ENCODE measurements at regions of chr17 and their contacts with region 1.

Region 1: GRCh38 chr17:49567871-49568694 is 7.6 kb upstream of the NXPH3 start:
- DNase-seq: no peak
- H3K4me3 ChIP-seq: peak overlapping the region; percentile 41 to 48
- H3K27ac ChIP-seq: peak overlapping the region; percentile 61
- H3K4me1 ChIP-seq: peaks cover 34% of the 10 kb centered on the region
- H3K27me3 ChIP-seq: no peaks in the 10 kb centered on the region
- CTCF ChIP-seq: peak; percentile 97 to 99 (median 97)
- POLR2A ChIP-seq: no peak

Region 2: GRCh38 chr17:49434821-49435670 is 133.0 kb before region 1 on chr17:
- intact Hi-C with region 1: no loop called
- DNase-seq: no peak
- H3K4me3 ChIP-seq: no peak overlapping the region
- H3K27ac ChIP-seq: no peak overlapping the region
- H3K4me1 ChIP-seq: no peaks in the 10 kb centered on the region
- H3K27me3 ChIP-seq: no peaks in the 10 kb centered on the region
- CTCF ChIP-seq: peak in 2 of 3 experiments; percentile 16 to 54
- POLR2A ChIP-seq: no peak

Region 3: DNA sequence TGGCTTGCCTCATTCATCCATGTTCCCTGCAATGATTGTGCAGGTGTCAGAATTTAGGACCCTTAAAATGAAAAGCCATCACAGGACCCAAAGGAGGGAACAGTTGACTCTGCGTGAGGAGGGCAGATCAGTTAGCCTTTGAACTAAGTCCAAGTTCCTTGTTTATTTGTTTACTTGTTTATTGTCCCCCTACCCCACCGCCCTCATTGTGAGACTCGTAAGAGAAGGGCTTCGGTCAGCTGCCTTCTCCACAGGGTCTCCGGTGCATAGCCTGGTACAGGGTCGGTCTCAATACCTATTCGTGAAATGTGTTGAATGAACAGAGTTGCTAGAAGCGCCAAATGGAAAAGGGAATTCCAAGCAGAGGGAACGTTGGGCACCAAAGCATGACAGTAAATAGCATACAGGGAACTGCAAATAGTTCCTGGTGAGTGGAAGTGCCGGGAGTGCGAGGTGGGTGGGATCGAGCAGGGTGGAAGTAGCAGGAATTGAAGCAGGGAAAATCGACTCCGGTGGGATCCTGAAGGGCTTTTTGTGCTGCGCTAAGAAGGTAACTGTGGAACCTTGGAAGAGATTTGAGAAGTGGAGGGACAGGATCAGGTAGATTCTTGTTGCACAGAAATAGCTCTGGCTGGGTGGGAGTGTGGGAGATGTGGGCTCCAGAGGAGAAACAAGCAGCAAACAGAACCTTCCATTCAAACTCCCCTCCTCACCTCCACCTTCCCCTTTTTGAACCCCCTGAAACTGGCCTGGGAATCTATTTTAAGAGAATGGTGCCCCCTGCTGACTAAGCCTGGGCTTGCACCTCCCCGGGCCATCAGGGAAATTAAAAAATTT is 127.0 kb after region 1 on chr17:
- intact Hi-C with region 1: loop called (anchors 1 kb)
- DNase-seq: no peak
- H3K4me3 ChIP-seq: no peak overlapping the region
- H3K27ac ChIP-seq: no peak overlapping the region
- H3K4me1 ChIP-seq: peaks cover 16% of the 10 kb centered on the region
- H3K27me3 ChIP-seq: no peaks in the 10 kb centered on the region
- CTCF ChIP-seq: peak; percentile 88 to 99 (median 97)
- POLR2A ChIP-seq: no peak

Region 4: DNA sequence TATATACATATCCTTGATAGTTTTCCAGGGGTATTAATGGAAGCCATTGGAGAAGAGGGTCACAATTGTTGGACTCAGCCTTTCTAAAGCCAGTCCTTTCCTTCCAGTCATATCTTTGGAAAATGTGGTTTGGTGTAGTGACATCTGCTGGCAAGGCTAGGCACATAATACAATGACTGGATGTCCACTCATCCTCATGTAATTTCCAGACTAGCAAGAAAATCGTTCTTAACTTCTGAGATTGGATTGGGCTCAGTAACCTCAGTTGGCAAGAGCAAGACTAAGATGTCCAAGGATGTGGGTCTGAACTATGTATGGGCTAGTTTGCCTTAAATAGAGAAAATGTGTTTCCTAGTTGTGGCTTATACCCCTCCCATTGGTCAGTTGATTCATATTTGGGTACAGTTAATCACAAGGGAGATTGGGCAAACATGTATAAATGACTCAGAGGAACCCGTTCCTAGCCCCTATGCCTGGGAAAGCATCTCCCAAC is 211.7 kb after region 1 on chr17:
- intact Hi-C with region 1: loop called (anchors 5 kb)
- DNase-seq: no peak
- H3K4me3 ChIP-seq: no peak overlapping the region
- H3K27ac ChIP-seq: no peak overlapping the region
- H3K4me1 ChIP-seq: peaks cover 19% of the 10 kb centered on the region
- H3K27me3 ChIP-seq: no peaks in the 10 kb centered on the region
- CTCF ChIP-seq: peak in 2 of 3 experiments; percentile 34 to 57
- POLR2A ChIP-seq: no peak

Measured in vagina (tissue), 2 donors.